ENCODE measurements at regions of chr3 and their contacts with region 1.

Region 1: DNA sequence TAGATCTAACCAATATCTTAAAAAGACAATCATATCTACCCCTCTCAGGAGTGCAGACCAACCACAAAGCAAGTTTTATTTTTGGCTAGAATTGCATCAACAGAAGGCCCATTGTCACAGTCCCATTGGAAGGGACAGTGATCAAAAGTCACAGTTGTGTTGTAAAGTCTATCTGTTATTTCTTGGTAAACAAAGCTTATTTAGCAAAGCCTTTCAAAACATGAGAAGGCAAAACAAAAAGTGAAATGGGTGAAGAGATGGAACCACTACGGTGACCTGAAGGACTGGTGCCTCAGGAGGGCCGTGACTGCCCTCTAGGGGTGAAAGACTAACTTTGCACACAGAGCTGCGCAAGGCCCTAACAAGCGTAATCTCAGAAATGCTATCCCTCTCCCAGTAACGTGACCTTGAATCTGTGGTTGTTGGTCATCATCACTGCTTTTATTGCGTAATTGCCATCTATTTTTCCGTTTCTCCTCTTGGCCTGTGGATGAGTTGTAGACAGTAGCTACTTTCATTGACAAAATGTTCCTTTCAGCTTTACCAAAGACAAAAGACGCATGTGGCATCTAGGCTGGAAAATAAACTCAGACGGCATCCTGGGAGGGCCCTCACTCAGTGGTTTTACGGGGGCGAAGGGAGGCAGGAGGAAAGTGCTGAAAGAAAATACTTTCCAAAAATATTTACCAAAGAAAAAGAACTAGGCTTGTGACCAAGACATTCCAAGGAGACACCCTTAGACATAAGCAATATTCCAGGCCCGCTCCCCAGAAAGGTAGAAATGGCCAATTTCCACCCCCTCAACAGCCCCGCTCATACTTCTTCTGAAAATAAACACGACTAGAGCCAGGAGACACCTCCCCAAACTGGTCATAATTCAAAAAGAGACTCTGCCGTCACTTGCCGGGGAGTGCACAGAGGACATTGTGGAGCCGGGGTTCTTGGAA is 79.4 kb downstream of the FRMD4B start:
- DNase-seq: peak; percentile 75
- H3K4me3 Mint-ChIP-seq: no peak overlapping the region
- H3K27ac Mint-ChIP-seq: no peak overlapping the region
- H3K4me1 Mint-ChIP-seq: peaks cover 4% of the 10 kb centered on the region
- H3K27me3 Mint-ChIP-seq: no peaks in the 10 kb centered on the region

Region 2: GRCh38 chr3:68988740-68989139 is 317.8 kb before region 1 on chr3:
- CTCF ChIA-PET with region 1: no interaction called
- DNase-seq: no peak
- H3K4me3 Mint-ChIP-seq: no peak overlapping the region
- H3K27ac Mint-ChIP-seq: no peak overlapping the region
- H3K4me1 Mint-ChIP-seq: no peaks in the 10 kb centered on the region
- H3K27me3 Mint-ChIP-seq: no peaks in the 10 kb centered on the region

Region 3: DNA sequence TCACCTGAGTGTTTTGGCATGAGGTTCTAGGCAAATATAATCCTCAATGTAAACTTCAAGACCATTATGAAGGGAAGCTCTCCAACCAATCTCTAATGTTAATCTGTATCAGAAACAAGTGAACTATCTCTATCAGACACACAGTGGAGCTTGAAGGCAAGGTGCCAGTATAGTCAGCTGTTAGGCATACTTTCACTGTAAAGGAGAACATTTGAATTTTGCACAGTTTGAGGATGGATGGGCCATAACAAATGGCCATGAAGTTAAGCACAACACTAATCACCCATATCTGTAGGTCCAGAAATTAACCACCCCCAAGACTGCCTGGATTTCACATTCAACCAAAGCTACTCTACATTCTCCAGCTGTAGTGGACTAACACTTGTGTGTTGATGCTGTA is 115.0 kb before region 1 on chr3:
- CTCF ChIA-PET with region 1: interaction called, 10 read pairs
- DNase-seq: no peak
- H3K4me3 Mint-ChIP-seq: no peak overlapping the region
- H3K27ac Mint-ChIP-seq: no peak overlapping the region
- H3K4me1 Mint-ChIP-seq: peaks cover 12% of the 10 kb centered on the region
- H3K27me3 Mint-ChIP-seq: no peaks in the 10 kb centered on the region

Region 4: DNA sequence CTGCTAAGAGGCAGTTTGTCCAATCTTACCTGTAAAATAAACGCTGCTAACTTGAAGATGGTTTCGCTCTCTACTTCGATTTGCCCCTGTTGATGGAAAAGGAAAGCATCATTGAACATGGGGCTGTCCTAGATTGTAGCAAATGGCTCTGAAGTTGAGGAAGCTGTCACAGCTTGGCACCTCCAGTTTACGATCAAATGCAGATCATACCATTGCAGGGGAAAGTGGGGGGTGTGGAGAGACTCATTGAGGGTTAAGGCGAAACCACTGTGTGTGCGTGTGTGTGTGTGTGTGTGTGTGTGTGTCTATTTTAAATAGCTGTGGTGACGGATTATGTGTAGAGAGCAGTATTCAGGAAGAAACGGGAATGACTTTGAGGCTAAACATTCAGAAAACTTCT is 56.5 kb before region 1 on chr3:
- CTCF ChIA-PET with region 1: interaction called, 10 read pairs
- DNase-seq: peak; percentile 71
- H3K4me3 Mint-ChIP-seq: peak overlapping the region; percentile 54
- H3K27ac Mint-ChIP-seq: peak overlapping the region; percentile 24
- H3K4me1 Mint-ChIP-seq: peaks cover 13% of the 10 kb centered on the region
- H3K27me3 Mint-ChIP-seq: peaks cover 6% of the 10 kb centered on the region

Region 5: DNA sequence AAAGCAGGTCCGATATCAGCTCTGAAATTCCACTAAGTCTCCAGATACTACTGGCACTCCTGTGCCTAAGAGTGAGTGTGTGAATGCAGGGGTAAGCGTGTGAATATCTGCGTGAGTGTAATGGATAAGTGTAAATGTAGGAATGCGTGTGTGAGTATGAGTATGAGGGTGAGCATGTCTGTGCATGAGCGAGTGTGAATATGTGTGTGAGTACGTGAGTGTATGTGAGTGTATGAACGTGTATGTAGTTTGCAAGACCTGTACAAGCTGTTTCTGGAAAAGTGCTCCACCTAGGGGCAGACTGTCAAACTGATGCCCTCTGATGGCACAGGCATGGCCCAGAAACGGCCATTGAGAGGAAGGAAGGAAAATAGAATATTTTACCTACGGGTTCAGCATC is 103.7 kb after region 1 on chr3:
- CTCF ChIA-PET with region 1: interaction called, 52 read pairs
- DNase-seq: peak; percentile 81
- H3K4me3 Mint-ChIP-seq: no peak overlapping the region
- H3K27ac Mint-ChIP-seq: no peak overlapping the region
- H3K4me1 Mint-ChIP-seq: no peaks in the 10 kb centered on the region
- H3K27me3 Mint-ChIP-seq: peaks cover 21% of the 10 kb centered on the region

Region 6: DNA sequence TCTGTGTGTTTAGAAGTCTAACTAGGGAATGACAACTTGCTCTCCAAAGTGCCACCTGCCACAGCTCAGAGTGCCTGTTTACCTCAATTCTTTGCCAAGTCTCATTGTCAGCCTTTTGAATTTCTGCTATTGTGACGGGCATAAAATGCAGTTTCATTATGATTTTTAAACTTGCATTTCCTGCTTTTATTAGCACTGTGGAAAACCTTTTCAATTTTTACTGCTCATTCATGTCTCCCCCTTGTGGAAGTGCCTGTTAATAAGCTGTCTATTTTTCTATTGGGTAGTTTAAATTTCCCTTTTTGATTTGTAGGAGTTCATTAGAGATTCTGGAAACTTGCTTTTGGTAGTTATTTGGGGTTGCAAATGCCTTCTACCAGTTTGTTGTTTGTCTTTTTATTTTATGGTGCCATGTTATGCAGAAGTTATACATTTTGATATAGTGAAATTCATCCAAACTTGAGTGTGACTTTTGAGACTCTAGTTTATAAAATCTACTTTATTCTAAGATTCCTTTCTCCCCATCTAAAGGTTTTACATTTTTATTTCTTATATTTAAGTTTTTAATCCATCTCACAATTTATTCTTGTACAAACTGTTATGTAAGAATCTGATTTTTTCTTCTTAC is 133.2 kb after region 1 on chr3:
- CTCF ChIA-PET with region 1: interaction called, 10 read pairs
- DNase-seq: no peak
- H3K4me3 Mint-ChIP-seq: no peak overlapping the region
- H3K27ac Mint-ChIP-seq: no peak overlapping the region
- H3K4me1 Mint-ChIP-seq: no peaks in the 10 kb centered on the region
- H3K27me3 Mint-ChIP-seq: no peaks in the 10 kb centered on the region